Activated CD4-positive, alpha-beta T cell treated with anti-CD3 and anti-CD28 coated beads, Interleukin-2, amount 10 ng/mL, durations not matched to agents 7 days and 5 days (primary cell): ENCODE measurements at regions of chr1 and their contacts with region 1.

Region 1: DNA sequence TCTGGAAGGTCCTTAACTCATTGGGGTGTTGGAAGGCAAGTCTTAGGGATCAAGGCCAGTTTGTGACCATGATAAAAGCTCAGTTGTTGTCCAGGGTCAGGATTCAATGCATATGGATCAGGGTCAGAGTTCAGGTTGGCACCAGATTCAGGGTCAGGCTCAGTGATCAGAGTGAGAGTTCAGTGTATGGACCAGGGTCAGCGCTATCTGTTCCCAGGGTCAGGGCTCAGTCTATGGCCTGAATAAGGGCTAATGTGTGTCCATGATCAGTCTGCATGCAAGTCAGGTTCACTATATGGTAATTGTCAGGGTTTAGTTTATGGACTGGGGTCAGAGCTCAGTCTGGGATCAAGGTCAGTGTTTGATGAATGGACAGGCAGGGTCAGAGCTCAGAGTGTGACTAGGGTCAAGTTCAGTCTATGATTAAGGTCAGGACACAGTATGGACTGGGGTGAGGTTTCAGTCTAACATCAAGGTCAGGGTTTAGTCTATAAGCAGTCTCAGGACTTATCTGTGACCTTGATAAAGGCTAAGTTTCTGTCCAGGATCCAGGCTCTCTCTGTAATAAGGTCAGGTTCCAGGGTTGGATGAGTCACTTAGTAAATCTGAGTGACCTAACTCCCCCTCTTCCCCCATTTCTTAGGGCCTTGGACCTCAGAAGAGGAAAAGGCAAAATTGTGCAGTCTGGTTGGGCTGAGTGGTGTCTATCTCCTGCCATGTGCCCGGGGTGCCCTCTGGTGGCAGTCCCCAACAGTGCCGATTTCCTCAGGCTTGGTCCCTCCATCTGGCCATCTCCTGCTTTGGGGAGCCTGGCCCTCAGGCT is 23.8 kb downstream of the KNCN start:
- DNase-seq: peak; percentile 79
- H3K4me3 Mint-ChIP-seq: no peak overlapping the region
- H3K27ac Mint-ChIP-seq: no peak overlapping the region
- H3K4me1 Mint-ChIP-seq: peaks cover 19% of the 10 kb centered on the region
- H3K27me3 Mint-ChIP-seq: peaks cover 26% of the 10 kb centered on the region

Region 2: DNA sequence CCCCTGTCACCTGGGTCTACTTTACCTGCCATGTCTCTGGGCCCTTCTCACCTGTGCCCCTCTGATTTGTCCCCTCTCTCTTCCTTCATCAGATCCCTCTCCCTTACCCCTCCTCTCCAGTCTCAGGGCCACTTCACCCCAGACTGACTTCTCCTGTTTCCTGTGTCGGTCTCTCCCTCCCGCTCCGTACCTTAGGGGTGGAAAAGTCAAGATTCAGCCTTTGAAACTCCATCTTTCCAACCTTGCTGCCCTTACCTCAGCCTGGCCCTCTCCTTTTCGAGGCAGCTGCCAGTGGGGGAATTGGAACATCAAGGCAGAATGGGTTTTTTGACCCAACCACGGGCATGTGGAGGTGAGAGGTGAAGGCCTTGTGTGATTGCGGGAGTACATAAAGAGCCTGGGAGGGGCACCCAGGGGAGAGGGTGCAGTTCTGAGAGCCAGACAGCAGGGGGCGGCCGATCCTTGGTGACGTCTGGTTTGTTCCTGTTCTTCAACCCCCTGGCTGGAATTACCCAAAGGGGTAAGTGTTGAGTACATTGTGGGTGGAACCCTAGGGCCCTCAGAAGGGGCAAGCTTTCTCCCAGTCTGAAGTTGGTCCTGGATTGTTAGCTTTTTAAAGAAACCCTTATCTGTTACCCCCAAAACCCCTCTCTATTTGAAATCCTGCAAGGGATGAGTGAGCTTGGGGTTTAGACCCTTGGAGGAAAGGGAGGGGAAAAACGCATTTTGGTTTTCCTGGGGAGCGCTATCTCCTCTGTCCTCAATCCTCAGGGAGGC is 50.3 kb before region 1 on chr1:
- CTCF ChIA-PET with region 1: interaction called, 18 read pairs
- POLR2A ChIA-PET with region 1: no interaction called
- DNase-seq: peak; percentile 76
- H3K4me3 Mint-ChIP-seq: no peak overlapping the region
- H3K27ac Mint-ChIP-seq: no peak overlapping the region
- H3K4me1 Mint-ChIP-seq: no peaks in the 10 kb centered on the region
- H3K27me3 Mint-ChIP-seq: peaks cover 25% of the 10 kb centered on the region

Region 3: GRCh38 chr1:46508757-46509156 is 18.9 kb before region 1 on chr1:
- CTCF ChIA-PET with region 1: no interaction called
- POLR2A ChIA-PET with region 1: no interaction called
- DNase-seq: no peak
- H3K4me3 Mint-ChIP-seq: no peak overlapping the region
- H3K27ac Mint-ChIP-seq: no peak overlapping the region
- H3K4me1 Mint-ChIP-seq: no peaks in the 10 kb centered on the region
- H3K27me3 Mint-ChIP-seq: peaks cover 1% of the 10 kb centered on the region